Naive thymus-derived CD4-positive, alpha-beta T cell (primary cell): ENCODE measurements at regions of chr2 and their contacts with region 1.

Region 1: DNA sequence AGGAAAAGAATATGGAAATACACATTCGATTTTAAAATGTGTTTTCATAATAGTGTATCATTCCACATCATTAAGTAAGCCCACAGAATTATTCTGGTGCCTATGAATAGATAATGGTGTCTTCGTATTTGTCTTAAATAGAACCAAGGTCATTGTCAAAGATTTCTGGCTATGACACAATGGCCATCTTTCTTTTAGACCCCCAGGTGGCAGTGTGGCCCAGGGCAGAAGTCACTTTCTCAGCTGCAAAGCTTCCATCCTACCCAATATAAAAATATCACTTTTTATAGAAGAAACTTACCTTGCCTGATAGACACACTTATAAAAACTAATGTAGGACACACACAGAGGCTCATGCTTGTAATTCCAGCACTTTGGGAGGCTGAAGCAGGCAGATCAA is 57.5 kb downstream of the ZRANB3 start:
- DNase-seq: peak in 6 of 9 donors; percentile 2 to 28 (median 20)
- ATAC-seq: peak; percentile 38
- H3K4me3 ChIP-seq: no peak overlapping the region
- H3K4me3 Mint-ChIP-seq: no peak overlapping the region
- H3K27ac ChIP-seq: no peak overlapping the region
- H3K27ac Mint-ChIP-seq: no peak overlapping the region
- H3K4me1 ChIP-seq: no peaks in the 10 kb centered on the region
- H3K4me1 Mint-ChIP-seq: no peaks in the 10 kb centered on the region
- H3K27me3 ChIP-seq: no peaks in the 10 kb centered on the region
- H3K27me3 Mint-ChIP-seq: no peaks in the 10 kb centered on the region

Region 2: DNA sequence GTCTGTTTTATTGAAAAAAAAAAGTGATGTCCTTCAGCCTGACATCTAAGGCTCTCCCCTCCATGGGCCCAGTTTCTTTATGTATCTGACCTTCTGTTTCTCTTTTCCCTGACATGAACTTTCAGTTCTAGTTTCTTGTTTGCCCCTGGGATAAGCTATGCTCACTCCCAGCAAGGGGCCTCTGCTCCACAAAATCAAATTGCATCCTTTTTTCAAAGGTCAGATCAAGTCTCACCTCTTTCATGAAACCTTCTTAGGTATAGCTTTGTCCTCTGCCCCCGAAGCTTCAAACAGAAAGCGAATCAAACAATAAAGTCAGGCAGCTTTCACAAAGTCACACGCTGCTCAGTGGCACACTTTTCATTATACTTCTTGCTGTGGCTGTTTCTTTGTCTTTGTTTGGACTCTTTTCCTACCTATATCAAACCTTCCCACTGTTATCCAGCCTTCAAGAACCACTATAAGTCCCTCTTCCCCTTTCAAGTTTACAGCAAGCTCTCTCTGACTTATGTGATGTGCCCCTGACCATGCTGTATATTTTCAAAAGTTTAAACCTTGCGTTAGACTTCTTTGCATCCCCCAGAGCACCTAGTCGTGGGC is 449.6 kb before region 1 on chr2:
- CTCF ChIA-PET with region 1: no interaction called
- POLR2A ChIA-PET with region 1: no interaction called
- intact Hi-C with region 1: no loop called
- DNase-seq: no peak
- ATAC-seq: no peak
- H3K4me3 ChIP-seq: no peak overlapping the region
- H3K4me3 Mint-ChIP-seq: peak overlapping the region in 1 of 10 donors; percentile 12
- H3K27ac ChIP-seq: no peak overlapping the region
- H3K27ac Mint-ChIP-seq: peak overlapping the region in 1 of 9 donors; percentile 0
- H3K4me1 ChIP-seq: no peaks in the 10 kb centered on the region
- H3K4me1 Mint-ChIP-seq: peaks cover 0 to 12% (median 5%) of the 10 kb centered on the region in 7 donors
- H3K27me3 ChIP-seq: no peaks in the 10 kb centered on the region
- H3K27me3 Mint-ChIP-seq: peaks cover 0 to 7% (median 6%) of the 10 kb centered on the region in 5 donors

Region 3: DNA sequence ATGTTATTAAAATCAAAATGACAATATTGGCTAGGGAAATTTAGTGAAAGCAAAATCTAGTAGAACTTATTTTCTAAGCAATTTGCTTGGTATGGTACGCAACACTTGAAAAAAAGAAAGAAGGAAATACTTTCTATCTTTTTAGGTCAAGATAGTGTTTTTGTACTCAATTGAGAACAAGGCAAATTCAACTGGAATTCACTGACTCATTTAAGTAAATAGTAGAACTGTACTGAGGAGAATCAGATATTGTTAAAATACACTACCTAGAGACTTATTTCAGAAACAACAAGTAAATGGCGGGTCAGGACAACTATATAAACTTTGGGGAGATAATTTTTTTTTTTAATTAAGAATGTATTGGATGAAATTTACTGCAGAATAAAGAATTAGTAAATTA is 38.5 kb after region 1 on chr2:
- CTCF ChIA-PET with region 1: no interaction called
- POLR2A ChIA-PET with region 1: no interaction called
- intact Hi-C with region 1: no loop called
- DNase-seq: no peak
- ATAC-seq: no peak
- H3K4me3 ChIP-seq: no peak overlapping the region
- H3K4me3 Mint-ChIP-seq: no peak overlapping the region
- H3K27ac ChIP-seq: no peak overlapping the region
- H3K27ac Mint-ChIP-seq: no peak overlapping the region
- H3K4me1 ChIP-seq: no peaks in the 10 kb centered on the region
- H3K4me1 Mint-ChIP-seq: no peaks in the 10 kb centered on the region
- H3K27me3 ChIP-seq: no peaks in the 10 kb centered on the region
- H3K27me3 Mint-ChIP-seq: no peaks in the 10 kb centered on the region

Region 4: GRCh38 chr2:135600915-135601314 is 127.3 kb after region 1 on chr2:
- CTCF ChIA-PET with region 1: interaction called, 10 read pairs
- POLR2A ChIA-PET with region 1: no interaction called
- intact Hi-C with region 1: loop called in 1 of 2 experiments (anchors 1 kb)
- DNase-seq: peak in 4 of 9 donors; percentile 1 to 20 (median 12)
- ATAC-seq: no peak
- H3K4me3 ChIP-seq: no peak overlapping the region
- H3K4me3 Mint-ChIP-seq: no peak overlapping the region
- H3K27ac ChIP-seq: no peak overlapping the region
- H3K27ac Mint-ChIP-seq: no peak overlapping the region
- H3K4me1 ChIP-seq: no peaks in the 10 kb centered on the region
- H3K4me1 Mint-ChIP-seq: peaks cover 2 to 26% (median 8%) of the 10 kb centered on the region in 7 donors
- H3K27me3 ChIP-seq: no peaks in the 10 kb centered on the region
- H3K27me3 Mint-ChIP-seq: no peaks in the 10 kb centered on the region

Region 5: DNA sequence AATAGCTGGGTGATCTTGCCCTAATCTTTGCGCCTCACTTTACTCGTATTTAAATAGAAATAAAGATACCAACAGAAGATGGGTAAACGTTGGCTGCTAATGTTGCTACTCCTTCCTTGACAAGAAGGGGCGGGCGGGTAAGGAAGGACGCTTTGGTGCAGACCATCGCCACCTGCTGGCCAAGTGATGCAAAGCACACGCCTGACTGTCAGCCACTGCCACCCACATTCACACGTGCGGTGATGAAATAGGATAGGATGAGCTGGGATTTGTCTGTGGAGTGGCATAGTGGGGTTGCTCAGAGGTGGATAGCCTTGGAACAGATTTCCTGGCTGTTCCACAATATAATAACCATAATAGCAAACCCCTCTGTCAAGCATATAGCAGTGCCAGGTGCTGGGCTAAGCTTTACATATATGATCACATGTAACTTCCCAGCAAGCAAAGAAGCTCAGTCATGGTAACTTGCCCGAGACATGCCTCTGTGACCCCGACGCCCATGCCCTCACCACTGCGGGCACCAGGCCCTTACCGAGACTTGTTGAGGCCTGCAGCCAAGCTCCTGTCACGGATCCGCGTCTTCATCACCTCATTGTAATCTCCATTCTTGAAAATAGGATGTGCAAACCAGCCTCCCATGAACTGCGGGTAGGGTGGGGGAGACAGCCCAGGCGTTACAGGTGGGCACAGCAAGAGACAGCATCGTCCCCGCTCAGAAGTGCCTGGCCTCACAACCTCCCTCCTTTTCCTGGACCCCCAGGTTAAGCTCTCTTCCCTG is 324.1 kb after region 1 on chr2:
- CTCF ChIA-PET with region 1: no interaction called
- POLR2A ChIA-PET with region 1: no interaction called
- intact Hi-C with region 1: loop called in 1 of 2 experiments (anchors 2 kb)
- DNase-seq: peak; percentile 46 to 78 (median 69)
- ATAC-seq: peak; percentile 92
- H3K4me3 ChIP-seq: no peak overlapping the region
- H3K4me3 Mint-ChIP-seq: peak overlapping the region in 1 of 10 donors; percentile 58
- H3K27ac ChIP-seq: no peak overlapping the region
- H3K27ac Mint-ChIP-seq: peak overlapping the region in 1 of 9 donors; percentile 65
- H3K4me1 ChIP-seq: peaks cover 0 to 6% of the 10 kb centered on the region in 2 donors
- H3K4me1 Mint-ChIP-seq: peaks cover 0 to 20% (median 14%) of the 10 kb centered on the region in 7 donors
- H3K27me3 ChIP-seq: no peaks in the 10 kb centered on the region
- H3K27me3 Mint-ChIP-seq: no peaks in the 10 kb centered on the region